MCF 10A (cell line): ENCODE measurements at regions of chr11 and their contacts with region 1.

Region 1: DNA sequence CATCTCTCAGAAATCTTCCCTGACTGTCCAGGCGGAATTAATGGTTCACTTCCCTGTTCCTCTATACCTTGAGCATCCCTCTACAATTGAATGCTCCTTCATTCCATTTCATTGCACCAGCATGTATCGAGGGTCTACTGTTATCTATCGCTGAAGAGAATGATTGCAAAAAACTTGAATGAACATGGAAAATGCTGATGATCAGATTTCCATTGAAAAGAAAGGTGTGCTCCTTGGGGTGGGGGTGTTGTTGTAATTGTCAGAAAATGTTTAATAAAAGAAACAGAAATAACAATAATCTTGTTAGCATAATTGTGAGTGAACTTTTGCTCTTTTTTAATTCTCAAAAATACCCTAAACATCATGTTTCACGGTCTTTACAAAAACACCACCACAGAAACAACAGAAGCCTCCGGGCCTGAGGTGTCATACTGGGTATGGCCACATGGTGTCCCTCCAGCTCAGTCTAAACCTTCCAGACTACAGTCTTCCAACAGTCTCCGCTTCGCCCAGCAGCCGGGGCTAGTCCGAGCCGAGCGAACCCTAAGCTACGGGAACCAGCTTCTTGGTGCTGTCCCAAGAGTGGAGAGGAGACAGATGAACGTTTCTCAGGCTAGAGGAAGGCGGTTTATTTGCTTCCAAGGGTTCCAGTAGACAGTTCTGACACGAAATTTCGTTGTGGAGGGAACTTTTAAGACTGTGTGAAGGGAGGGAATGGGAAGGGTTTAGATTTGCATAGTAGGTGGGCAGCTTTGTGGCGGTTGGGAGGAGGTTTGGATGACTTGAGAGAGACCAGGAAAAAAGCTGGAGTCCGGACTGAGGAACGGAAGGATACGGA is 75.8 kb upstream of the ZBED5 start:
- DNase-seq: peak; percentile 93
- H3K4me3 Mint-ChIP-seq: peak overlapping the region; percentile 80
- H3K27ac Mint-ChIP-seq: peak overlapping the region; percentile 29
- H3K4me1 Mint-ChIP-seq: peaks cover 25% of the 10 kb centered on the region
- H3K27me3 Mint-ChIP-seq: no peaks in the 10 kb centered on the region
- CTCF ChIP-seq: peak; percentile 90

Region 2: DNA sequence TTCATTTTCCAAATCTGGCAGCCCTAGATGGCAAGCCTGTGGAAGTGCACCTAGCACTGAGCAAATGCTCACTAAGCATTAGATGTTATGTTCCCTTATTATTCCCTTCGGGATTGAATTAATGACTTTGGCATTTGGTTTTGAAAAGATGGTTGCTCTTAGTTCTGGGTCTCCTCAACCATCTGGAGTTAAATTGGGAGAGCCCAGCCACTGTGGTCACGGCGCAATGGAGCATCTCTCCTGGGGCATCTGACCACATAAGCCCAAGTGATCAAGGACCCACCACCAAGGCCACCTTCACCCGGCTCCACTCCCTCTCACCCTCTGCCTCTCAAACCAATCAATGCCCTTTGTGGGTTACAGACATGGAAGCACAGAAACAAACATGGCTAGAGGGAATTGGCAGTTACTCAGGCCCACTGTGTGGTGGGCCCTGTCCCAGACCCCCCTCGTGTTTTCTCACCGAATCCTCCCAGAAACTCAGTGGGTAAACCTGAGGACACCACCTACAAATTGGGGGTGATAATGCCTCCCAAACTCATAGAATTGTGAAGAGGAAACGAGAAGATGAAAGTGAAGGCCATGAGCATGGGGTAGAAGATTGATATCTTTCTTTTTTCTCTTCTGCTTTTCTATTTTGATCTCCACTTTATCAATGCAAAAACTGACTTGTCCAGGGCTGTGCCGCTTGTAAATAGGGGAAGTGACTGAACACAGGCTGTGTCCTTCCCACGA is 292.3 kb before region 1 on chr11:
- CTCF ChIA-PET with region 1: no interaction called
- POLR2A ChIA-PET with region 1: no interaction called
- intact Hi-C with region 1: no loop called
- DNase-seq: no peak
- H3K4me3 Mint-ChIP-seq: no peak overlapping the region
- H3K27ac Mint-ChIP-seq: no peak overlapping the region
- H3K4me1 Mint-ChIP-seq: no peaks in the 10 kb centered on the region
- H3K27me3 Mint-ChIP-seq: no peaks in the 10 kb centered on the region
- CTCF ChIP-seq: no peak

Region 3: GRCh38 chr11:10770626-10771254 is 162.9 kb before region 1 on chr11:
- CTCF ChIA-PET with region 1: interaction called, 10 read pairs
- POLR2A ChIA-PET with region 1: interaction called, 3 read pairs
- intact Hi-C with region 1: no loop called
- DNase-seq: peak; percentile 58
- H3K4me3 Mint-ChIP-seq: no peak overlapping the region
- H3K27ac Mint-ChIP-seq: no peak overlapping the region
- H3K4me1 Mint-ChIP-seq: no peaks in the 10 kb centered on the region
- H3K27me3 Mint-ChIP-seq: no peaks in the 10 kb centered on the region
- CTCF ChIP-seq: peak; percentile 53

Region 4: GRCh38 chr11:10878408-10879214 is 55.1 kb before region 1 on chr11:
- CTCF ChIA-PET with region 1: interaction called, 5 read pairs
- POLR2A ChIA-PET with region 1: interaction called, 3 read pairs
- intact Hi-C with region 1: loop called (anchors 5 kb)
- DNase-seq: peak; percentile 73
- H3K4me3 Mint-ChIP-seq: no peak overlapping the region
- H3K27ac Mint-ChIP-seq: no peak overlapping the region
- H3K4me1 Mint-ChIP-seq: peaks cover 26% of the 10 kb centered on the region
- H3K27me3 Mint-ChIP-seq: no peaks in the 10 kb centered on the region
- CTCF ChIP-seq: peak; percentile 57

Region 5: DNA sequence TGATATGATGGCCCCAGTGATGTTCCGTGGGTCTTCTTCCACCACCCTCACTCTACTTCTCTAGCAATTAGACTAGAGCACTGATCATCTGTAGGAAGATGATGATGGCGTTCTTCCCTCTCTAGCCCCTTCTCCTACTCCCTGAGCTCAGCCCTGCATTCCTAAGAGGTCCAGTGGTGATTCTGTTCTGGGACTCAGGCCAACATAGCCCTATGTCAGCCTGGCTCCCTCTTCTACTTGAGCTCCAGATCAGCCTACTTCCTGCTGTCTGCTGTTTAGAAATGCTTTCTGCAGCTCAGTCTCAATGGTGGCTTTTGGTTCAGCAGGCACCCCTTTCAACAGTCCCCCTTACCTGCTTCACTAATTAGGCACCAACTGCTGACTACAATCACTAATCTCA is 10.3 kb after region 1 on chr11:
- CTCF ChIA-PET with region 1: interaction called, 22 read pairs
- POLR2A ChIA-PET with region 1: interaction called, 4 read pairs
- intact Hi-C with region 1: no loop called
- DNase-seq: no peak
- H3K4me3 Mint-ChIP-seq: no peak overlapping the region
- H3K27ac Mint-ChIP-seq: no peak overlapping the region
- H3K4me1 Mint-ChIP-seq: peaks cover 6% of the 10 kb centered on the region
- H3K27me3 Mint-ChIP-seq: peaks cover under 1% of the 10 kb centered on the region
- CTCF ChIP-seq: no peak

Region 6: GRCh38 chr11:11016068-11016467 is 82.4 kb after region 1 on chr11:
- CTCF ChIA-PET with region 1: interaction called, 58 read pairs
- POLR2A ChIA-PET with region 1: interaction called, 12 read pairs
- intact Hi-C with region 1: no loop called
- DNase-seq: no peak
- H3K4me3 Mint-ChIP-seq: no peak overlapping the region
- H3K27ac Mint-ChIP-seq: no peak overlapping the region
- H3K4me1 Mint-ChIP-seq: peaks cover 4% of the 10 kb centered on the region
- H3K27me3 Mint-ChIP-seq: peaks cover 7% of the 10 kb centered on the region
- CTCF ChIP-seq: no peak

Region 7: GRCh38 chr11:11028017-11028692 is 94.5 kb after region 1 on chr11:
- CTCF ChIA-PET with region 1: interaction called, 38 read pairs
- POLR2A ChIA-PET with region 1: interaction called, 11 read pairs
- intact Hi-C with region 1: no loop called
- DNase-seq: peak; percentile 74
- H3K4me3 Mint-ChIP-seq: no peak overlapping the region
- H3K27ac Mint-ChIP-seq: no peak overlapping the region
- H3K4me1 Mint-ChIP-seq: peaks cover 16% of the 10 kb centered on the region
- H3K27me3 Mint-ChIP-seq: no peaks in the 10 kb centered on the region
- CTCF ChIP-seq: peak; percentile 86

Region 8: DNA sequence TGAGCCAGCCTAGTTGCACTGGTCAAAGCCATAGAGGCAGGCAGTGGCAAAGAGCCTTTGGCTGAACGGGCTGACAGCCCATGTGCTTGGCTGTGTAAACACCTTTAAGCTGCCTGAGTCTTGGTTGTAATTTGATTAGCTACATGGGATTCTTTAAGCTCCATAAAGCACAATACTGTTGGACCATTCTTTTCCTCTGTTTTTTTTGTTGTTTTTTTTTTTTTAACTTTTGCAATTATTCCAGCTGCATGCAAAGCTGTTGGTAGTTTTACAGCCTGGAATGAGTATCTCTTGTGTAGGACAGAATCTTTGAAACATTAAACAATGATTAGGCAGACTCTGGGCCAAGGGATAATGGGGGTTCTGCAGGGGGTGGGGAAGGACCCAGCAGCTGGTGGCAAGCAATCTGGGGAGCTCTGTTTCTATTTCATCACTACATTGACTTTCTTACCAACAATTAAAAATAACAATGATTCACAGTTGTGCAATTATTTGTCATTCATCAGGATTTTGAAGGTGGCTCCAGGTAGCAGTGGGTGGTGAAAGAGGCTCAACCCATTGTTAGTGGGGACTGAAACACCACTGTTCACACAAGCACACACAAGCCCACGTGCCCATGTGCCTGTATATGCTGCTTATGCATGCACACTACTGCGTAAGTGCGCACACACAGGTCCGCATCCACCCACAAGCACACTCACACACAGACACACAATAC is 488.9 kb after region 1 on chr11:
- CTCF ChIA-PET with region 1: no interaction called
- POLR2A ChIA-PET with region 1: no interaction called
- intact Hi-C with region 1: no loop called
- DNase-seq: peak; percentile 80
- H3K4me3 Mint-ChIP-seq: no peak overlapping the region
- H3K27ac Mint-ChIP-seq: no peak overlapping the region
- H3K4me1 Mint-ChIP-seq: peaks cover 57% of the 10 kb centered on the region
- H3K27me3 Mint-ChIP-seq: no peaks in the 10 kb centered on the region
- CTCF ChIP-seq: no peak

Region 9: GRCh38 chr11:11787305-11788062 is 853.8 kb after region 1 on chr11:
- CTCF ChIA-PET with region 1: interaction called, 9 read pairs
- POLR2A ChIA-PET with region 1: no interaction called
- intact Hi-C with region 1: loop called (anchors 1 kb)
- DNase-seq: peak; percentile 81
- H3K4me3 Mint-ChIP-seq: no peak overlapping the region
- H3K27ac Mint-ChIP-seq: no peak overlapping the region
- H3K4me1 Mint-ChIP-seq: peaks cover 26% of the 10 kb centered on the region
- H3K27me3 Mint-ChIP-seq: no peaks in the 10 kb centered on the region
- CTCF ChIP-seq: peak; percentile 87